CD14-positive monocyte (primary cell): ENCODE measurements at regions of chr21 and their contacts with region 1.

Region 1: GRCh38 chr21:25457411-25457810 is 149.9 kb downstream of the MRPL39 start:
- DNase-seq: peak; percentile 71 to 94 (median 91)
- H3K4me3 ChIP-seq: no peak overlapping the region
- H3K4me3 Mint-ChIP-seq: peak overlapping the region in 1 of 2 donors; percentile 65
- H3K27ac ChIP-seq: no peak overlapping the region
- H3K27ac Mint-ChIP-seq: peak overlapping the region; percentile 46 to 90 (median 79)
- H3K4me1 ChIP-seq: peaks cover 9 to 11% of the 10 kb centered on the region in 2 donors
- H3K4me1 Mint-ChIP-seq: peaks cover 6% of the 10 kb centered on the region
- H3K27me3 ChIP-seq: no peaks in the 10 kb centered on the region
- H3K27me3 Mint-ChIP-seq: peaks cover 0 to 7% (median 0%) of the 10 kb centered on the region in 3 donors
- CTCF ChIP-seq: no peak

Region 2: DNA sequence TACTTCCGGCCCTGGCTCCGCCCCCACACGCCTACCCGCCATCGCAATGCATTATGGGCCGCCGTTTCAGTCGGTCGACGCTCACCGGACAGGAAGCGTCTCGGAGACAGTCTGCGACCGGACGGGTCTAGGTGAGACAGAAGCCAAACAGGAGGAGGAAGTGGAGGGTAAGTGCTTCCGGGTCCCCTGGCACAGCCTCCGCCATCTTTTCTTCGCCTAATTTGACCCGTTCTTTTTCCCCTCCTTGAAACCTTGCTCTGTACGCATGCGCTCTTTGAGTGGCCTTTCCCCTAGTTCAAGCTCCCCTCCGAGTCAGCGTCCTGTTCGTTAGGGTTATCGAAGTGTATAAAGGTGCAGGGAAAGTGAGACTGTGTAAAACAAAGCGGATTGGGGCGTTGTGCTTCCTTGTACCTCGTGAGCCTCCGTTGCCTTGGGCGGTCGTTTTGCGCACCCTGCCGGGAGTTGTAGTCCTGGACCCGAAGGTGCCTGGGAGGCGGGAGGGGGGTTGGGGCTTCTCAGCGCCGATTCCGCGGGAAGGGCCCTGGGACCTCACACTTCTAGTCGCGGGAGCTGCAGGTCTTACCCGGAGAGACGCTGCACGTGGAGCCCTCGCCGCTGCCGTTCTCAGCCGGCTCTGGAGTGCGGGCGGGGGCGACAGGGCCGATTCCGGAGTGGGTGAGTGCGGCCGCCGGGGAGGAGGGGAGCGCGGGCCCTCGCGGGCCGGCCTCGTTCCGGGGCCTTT is 277.7 kb after region 1 on chr21 and contains the starts of genes ATP5PF and GABPA:
- intact Hi-C with region 1: loop called in 1 of 2 experiments (anchors 10 kb)
- DNase-seq: peak; percentile 98 to 99 (median 98)
- H3K4me3 ChIP-seq: peak within 1 kb of the TSS; percentile 65 to 93 (median 77)
- H3K4me3 Mint-ChIP-seq: peak within 1 kb of the TSS; percentile 94 to 100
- H3K27ac ChIP-seq: peak within 1 kb of the TSS; percentile 96 to 99
- H3K27ac Mint-ChIP-seq: peak within 1 kb of the TSS; percentile 100
- H3K4me1 ChIP-seq: peaks cover 20 to 33% of the 10 kb centered on the region in 2 donors
- H3K4me1 Mint-ChIP-seq: peaks cover 35% of the 10 kb centered on the region
- H3K27me3 ChIP-seq: no peaks in the 10 kb centered on the region
- H3K27me3 Mint-ChIP-seq: no peaks in the 10 kb centered on the region
- CTCF ChIP-seq: no peak
- polyA plus RNA-seq, gene ATP5PF: 124 to 360 (median 340) TPM
- polyA plus RNA-seq, gene GABPA: 7.1 to 20.1 (median 12.9) TPM

Region 3: DNA sequence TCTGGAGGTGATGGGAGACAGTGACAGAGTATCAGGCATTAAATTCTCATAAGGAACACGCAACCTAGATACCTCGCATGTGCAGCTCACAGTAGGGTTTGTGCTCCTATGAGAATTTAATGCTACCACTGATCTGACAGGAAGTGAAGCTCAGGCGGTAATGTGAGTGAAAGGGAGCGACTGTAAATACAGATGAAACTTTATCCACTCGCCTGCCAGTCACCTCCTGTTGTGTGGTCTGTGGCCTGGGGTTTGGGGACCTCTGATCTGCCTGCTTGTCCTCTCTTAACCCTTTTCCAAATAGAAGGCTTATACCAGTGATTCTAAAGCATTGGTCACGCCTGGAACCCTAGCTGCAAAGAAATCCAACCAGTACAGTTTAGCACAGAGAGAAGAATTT is 292.7 kb after region 1 on chr21:
- intact Hi-C with region 1: no loop called
- DNase-seq: no peak
- H3K4me3 ChIP-seq: no peak overlapping the region
- H3K4me3 Mint-ChIP-seq: no peak overlapping the region
- H3K27ac ChIP-seq: no peak overlapping the region
- H3K27ac Mint-ChIP-seq: peak overlapping the region in 1 of 7 donors; percentile 50
- H3K4me1 ChIP-seq: no peaks in the 10 kb centered on the region
- H3K4me1 Mint-ChIP-seq: peaks cover 2% of the 10 kb centered on the region
- H3K27me3 ChIP-seq: no peaks in the 10 kb centered on the region
- H3K27me3 Mint-ChIP-seq: no peaks in the 10 kb centered on the region
- CTCF ChIP-seq: no peak

Region 4: DNA sequence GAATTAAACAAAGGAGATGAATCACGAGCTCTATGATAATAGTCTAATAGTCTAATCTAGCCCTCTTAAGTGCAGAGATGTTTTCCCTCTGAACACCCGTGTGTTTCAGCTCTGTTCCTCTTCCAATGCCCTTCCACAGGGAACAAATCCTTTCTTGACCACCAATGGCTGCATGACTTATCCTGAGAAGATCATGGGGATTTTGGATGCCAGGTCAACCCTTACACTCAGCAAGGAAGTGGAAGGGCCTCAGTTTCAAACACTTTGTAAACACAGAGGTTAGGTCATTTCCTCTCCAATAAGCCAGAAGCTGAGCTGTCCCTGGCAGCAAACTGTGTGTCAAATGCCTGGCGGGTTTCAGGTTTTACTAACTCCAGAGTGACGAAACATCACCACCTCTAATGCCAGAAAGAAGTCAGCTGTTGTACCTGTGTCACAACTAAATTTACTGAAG is 477.4 kb after region 1 on chr21:
- intact Hi-C with region 1: no loop called
- DNase-seq: peak in 1 of 3 donors; percentile 8
- H3K4me3 ChIP-seq: no peak overlapping the region
- H3K4me3 Mint-ChIP-seq: no peak overlapping the region
- H3K27ac ChIP-seq: peak overlapping the region in 1 of 2 donors; percentile 43
- H3K27ac Mint-ChIP-seq: peak overlapping the region in 3 of 7 donors; percentile 5 to 74 (median 27)
- H3K4me1 ChIP-seq: no peaks in the 10 kb centered on the region
- H3K4me1 Mint-ChIP-seq: peaks cover 4% of the 10 kb centered on the region
- H3K27me3 ChIP-seq: no peaks in the 10 kb centered on the region
- H3K27me3 Mint-ChIP-seq: no peaks in the 10 kb centered on the region
- CTCF ChIP-seq: no peak